ENCODE measurements at regions of chr1 and their contacts with region 1.

Region 1: DNA sequence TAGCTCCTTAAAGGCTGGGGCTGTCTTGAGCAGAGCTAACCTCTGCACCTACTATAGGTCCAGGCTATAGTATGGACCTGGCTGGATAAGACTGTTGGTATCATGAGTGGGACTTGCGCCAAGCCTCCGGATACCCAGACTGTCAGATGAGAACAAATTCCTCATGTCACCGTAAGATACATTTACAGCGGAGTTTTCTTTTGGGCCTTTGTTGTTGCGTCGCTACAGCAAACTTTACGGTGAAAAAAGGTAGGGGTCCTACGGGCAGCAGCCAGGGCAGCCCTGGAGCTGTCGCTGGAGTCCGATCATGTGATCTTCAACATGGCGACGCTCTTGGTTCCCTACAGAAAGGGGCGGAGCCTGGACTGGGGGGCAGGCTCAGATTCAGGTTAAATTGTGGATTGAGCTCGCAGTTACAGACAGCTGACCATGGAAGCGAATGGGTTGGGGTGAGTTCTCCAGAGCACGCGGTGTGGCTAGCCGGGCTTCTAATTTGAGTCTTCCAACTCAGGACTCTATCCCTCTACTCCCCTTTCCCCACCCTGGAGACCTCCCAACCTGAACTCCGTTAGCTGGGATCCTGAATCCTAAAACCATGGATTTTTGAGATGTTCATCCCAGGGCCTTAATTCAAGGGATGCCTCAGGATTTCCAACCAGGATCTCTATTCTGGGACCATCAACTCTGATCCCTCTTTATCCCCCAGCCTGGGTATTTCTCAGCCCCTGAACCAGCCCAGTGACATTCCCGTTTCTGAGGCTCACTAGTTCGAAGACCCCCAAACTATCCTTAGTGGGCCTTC is at the start of gene UROD:
- DNase-seq: peak; percentile 87 to 99 (median 89)

Region 2: DNA sequence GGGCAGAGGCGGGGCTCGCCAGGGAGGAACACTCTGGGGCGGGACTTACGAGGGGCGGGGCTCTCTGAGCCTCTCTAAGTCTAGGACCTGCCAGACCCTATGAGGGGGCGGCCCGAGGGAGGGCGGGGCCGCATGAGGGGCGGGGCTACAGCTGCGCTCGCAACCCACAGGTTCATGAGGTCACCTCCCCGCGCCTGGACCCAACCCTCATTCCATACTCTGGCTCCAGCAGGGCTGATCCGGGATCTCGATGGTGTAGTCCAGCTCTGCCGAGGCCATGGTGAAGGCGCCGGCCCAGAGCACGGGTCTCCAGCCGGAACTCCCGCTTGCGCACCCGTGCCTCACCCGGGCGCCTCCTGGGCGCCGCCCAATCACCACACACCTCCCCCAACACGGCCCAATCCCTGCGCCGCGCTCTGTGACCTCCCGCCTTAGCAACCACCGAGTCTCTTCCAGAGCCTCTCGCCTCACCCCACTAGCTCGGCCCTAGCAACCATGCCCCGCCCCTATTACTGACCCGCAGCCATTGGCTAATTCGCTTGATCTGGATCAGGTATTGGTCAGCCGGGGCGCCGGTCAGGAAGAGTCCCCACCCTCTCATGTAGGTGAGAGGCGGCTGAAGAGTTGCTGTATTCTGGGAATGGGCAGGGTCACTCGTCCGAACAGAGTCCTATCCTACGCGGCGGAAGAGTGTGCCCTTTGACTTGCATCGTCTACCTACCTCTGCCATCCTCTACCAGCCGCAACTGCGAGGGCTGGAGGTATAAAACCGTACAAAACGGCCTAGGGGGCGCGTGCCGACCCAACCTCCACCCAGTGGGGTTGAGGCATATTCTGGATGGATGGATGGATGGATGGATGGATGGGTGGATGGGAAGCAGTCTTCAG is 337.7 kb before region 1 on chr1 and contains the starts of genes ARMH1 and TMEM53:
- intact Hi-C with region 1: no loop called
- DNase-seq: peak; percentile 96 to 100 (median 99)

Region 3: GRCh38 chr1:44799770-44800584 is 212.1 kb before region 1 on chr1 and contains the start of gene PLK3:
- intact Hi-C with region 1: loop called (anchors 5 kb)
- DNase-seq: peak; percentile 96 to 100 (median 98)

Region 4: GRCh38 chr1:44907893-44908292 is 104.1 kb before region 1 on chr1:
- intact Hi-C with region 1: no loop called
- DNase-seq: no peak

Region 5: GRCh38 chr1:44985747-44986359 is 26.2 kb before region 1 on chr1:
- intact Hi-C with region 1: loop called (anchors 2 kb)
- DNase-seq: peak in 2 of 10 donors; percentile 14 to 25

Region 6: DNA sequence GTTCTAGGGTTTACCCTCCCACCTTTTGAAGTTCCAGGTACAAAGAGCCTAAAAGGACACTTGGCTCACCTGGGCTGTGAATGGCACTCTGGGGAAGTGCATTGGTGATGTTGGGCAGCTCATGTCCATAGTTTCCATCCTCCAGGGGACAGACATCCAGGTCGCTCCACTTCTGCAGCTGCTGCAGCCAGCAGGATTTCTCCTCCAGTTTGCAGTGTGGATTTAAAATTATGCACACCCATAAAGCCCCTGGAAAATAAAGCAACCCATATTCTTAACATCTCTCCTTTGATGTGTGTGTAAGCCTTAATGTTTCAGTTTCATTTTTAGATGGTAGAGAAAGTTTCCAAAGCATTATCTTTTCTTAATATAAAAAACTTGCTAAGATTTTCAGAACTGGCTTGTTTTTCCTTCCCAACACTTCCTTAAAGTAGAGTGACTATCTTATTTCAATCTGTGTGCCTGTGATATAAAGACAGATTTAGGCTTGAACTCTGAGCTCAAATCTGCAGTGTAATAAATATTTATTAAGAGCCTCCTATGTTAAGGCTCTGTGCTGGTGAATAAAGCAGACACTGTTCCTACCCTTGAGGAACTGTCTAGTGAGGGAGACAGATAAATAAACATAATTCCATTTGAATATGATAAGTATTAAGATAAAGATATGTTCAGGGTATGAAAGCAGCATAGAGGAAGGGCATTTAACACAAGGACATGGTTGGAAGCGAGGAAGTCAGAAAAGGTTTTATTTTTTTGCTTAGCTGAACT is 39.2 kb after region 1 on chr1:
- intact Hi-C with region 1: no loop called
- DNase-seq: no peak

Region 7: GRCh38 chr1:45303582-45304310 is 291.7 kb after region 1 on chr1:
- intact Hi-C with region 1: loop called (anchors 1 kb)
- DNase-seq: peak; percentile 95 to 99 (median 98)